ENCODE measurements at regions of chr12 and their contacts with region 1.

Region 1: DNA sequence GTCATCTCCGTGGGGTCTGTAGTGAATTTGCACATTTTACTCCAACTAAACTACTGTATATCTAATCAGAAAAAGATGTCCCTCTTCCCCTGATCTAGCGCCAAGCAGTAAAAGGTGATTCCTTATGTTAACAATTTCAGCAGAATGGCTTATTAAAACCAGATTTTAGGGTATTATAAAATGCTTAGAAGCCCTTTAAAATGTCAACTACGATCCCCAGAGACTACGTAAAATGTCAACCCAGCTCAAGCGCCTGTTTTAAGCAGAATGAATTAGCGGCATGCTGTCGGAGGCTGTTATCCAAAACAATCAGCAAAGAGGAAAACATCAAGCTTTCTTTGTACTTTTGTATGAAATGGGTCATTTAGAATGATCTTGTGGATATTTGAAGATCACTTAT is 408.9 kb downstream of the SOX5 start:
- DNase-seq: no peak
- H3K4me3 ChIP-seq: no peak overlapping the region
- H3K27ac ChIP-seq: no peak overlapping the region
- H3K4me1 ChIP-seq: no peaks in the 10 kb centered on the region
- H3K27me3 ChIP-seq: no peaks in the 10 kb centered on the region
- CTCF ChIP-seq: no peak
- POLR2A ChIP-seq: no peak

Region 2: GRCh38 chr12:23569356-23569755 is 28.8 kb after region 1 on chr12:
- intact Hi-C with region 1: loop called (anchors 2 kb)
- DNase-seq: no peak
- H3K4me3 ChIP-seq: no peak overlapping the region
- H3K27ac ChIP-seq: no peak overlapping the region
- H3K4me1 ChIP-seq: no peaks in the 10 kb centered on the region
- H3K27me3 ChIP-seq: no peaks in the 10 kb centered on the region
- CTCF ChIP-seq: no peak
- POLR2A ChIP-seq: no peak

Region 3: DNA sequence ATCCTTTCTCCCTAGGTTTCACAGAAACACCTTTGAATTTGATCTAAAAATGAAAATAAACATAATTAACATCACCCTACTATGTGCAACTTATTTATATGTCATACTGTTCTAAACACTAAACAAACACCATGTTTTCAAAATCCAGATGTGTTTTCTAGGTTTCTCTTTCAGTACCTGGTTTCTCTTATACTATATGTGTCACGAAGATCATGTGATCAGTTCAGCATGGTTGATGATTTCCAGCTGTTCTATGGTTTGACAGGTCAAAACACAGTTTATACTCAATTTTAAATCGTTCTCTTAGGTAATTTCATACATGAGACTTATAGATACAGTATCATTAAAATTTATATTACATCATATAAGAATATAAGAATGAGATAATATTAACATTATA is 35.8 kb after region 1 on chr12:
- intact Hi-C with region 1: loop called (anchors 2 kb)
- DNase-seq: no peak
- H3K4me3 ChIP-seq: no peak overlapping the region
- H3K27ac ChIP-seq: no peak overlapping the region
- H3K4me1 ChIP-seq: no peaks in the 10 kb centered on the region
- H3K27me3 ChIP-seq: no peaks in the 10 kb centered on the region
- CTCF ChIP-seq: no peak
- POLR2A ChIP-seq: no peak

Region 4: DNA sequence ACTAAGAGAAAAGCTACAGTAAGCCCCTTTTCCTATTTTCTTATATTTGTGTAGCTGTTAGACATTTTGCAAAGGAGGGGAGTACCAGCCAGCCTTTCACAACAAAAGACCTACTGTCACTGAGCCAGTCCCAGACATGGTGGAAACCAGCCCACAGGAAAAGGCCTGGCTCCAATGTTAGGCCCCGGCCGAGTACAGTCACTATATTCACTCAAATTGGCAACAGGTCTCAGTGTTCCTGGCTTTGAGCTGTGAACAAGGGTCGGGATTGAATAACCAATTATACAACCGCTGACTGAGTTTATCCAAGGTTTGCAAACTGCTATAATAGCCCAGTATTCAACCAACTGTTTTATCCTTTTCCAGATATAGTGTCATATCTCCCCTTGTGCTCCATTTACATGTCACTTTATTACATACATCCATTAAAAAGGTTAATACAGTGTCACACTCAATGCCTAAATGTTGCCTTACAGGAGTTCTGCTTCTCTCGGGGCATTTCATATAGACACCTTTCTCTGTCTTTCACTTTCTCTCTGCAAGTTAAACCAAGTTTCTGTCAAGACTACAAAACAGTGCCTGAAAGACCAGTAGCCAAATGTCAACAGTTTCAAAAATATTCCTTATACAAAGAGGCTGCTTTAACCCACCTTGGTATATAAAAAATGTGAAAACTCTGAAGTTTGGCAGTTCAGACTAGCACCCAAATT is 230.8 kb after region 1 on chr12:
- intact Hi-C with region 1: no loop called
- DNase-seq: peak in 1 of 2 donors; percentile 51
- H3K4me3 ChIP-seq: no peak overlapping the region
- H3K27ac ChIP-seq: peak overlapping the region; percentile 19 to 57
- H3K4me1 ChIP-seq: no peaks in the 10 kb centered on the region
- H3K27me3 ChIP-seq: no peaks in the 10 kb centered on the region
- CTCF ChIP-seq: no peak
- POLR2A ChIP-seq: no peak

Measured in breast epithelium (tissue), 4 donors.